ENCODE measurements at regions of chr14 and their contacts with region 1.

Region 1: DNA sequence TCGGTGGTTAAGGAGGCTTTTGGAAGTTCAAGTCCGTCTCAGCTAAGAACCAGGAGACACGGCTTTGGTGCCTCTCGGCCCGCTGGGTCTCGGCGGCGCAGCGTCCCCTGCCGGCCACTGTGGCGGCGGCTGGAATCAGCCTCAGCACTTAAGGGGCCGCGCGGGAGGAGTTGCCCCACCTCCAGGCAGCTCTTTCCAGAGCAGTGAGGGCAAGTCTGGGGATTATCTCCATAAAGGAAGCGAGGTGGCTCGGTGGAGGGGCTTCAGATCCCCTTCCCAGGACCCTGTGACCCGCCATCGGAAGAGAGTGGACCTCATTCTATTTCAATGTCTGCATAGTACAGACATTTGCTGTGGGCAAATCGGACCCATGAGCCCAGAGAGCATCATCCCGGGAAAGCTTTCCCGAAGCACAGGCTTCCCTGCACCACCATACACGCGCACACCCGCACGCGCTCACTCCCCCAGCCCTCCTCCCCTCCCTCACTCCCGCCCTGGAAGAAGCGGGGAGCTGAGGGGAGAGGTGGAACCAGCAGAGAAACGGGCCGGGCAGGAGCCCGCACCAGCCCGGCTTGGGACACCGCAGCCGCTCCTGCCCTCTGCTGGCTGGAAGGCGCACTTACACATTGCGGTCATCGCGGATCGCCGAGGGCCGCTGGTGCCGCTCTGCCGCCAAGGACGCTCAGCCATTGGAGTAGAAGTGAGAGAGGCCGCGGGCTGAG is 15.9 kb downstream of the RNASE2 start:
- DNase-seq: peak; percentile 83
- ATAC-seq: peak; percentile 91
- H3K4me3 Mint-ChIP-seq: peak overlapping the region; percentile 86
- H3K27ac Mint-ChIP-seq: peak overlapping the region; percentile 56
- H3K4me1 Mint-ChIP-seq: peaks cover 14% of the 10 kb centered on the region
- H3K27me3 Mint-ChIP-seq: peaks cover 47% of the 10 kb centered on the region

Region 2: GRCh38 chr14:20682435-20683124 is 288.6 kb before region 1 on chr14:
- CTCF ChIA-PET with region 1: interaction called, 14 read pairs
- POLR2A ChIA-PET with region 1: no interaction called
- DNase-seq: peak; percentile 83
- ATAC-seq: peak; percentile 60
- H3K4me3 Mint-ChIP-seq: no peak overlapping the region
- H3K27ac Mint-ChIP-seq: no peak overlapping the region
- H3K4me1 Mint-ChIP-seq: peaks cover 14% of the 10 kb centered on the region
- H3K27me3 Mint-ChIP-seq: no peaks in the 10 kb centered on the region

Region 3: GRCh38 chr14:20697273-20698017 is 273.7 kb before region 1 on chr14:
- CTCF ChIA-PET with region 1: interaction called, 26 read pairs
- POLR2A ChIA-PET with region 1: no interaction called
- DNase-seq: peak; percentile 72
- ATAC-seq: peak; percentile 75
- H3K4me3 Mint-ChIP-seq: no peak overlapping the region
- H3K27ac Mint-ChIP-seq: no peak overlapping the region
- H3K4me1 Mint-ChIP-seq: no peaks in the 10 kb centered on the region
- H3K27me3 Mint-ChIP-seq: peaks cover 8% of the 10 kb centered on the region

Region 4: GRCh38 chr14:20855652-20856291 is 115.4 kb before region 1 on chr14:
- CTCF ChIA-PET with region 1: interaction called, 79 read pairs
- POLR2A ChIA-PET with region 1: interaction called, 3 read pairs
- DNase-seq: peak; percentile 63
- ATAC-seq: peak; percentile 84
- H3K4me3 Mint-ChIP-seq: no peak overlapping the region
- H3K27ac Mint-ChIP-seq: no peak overlapping the region
- H3K4me1 Mint-ChIP-seq: peaks cover 4% of the 10 kb centered on the region
- H3K27me3 Mint-ChIP-seq: peaks cover 23% of the 10 kb centered on the region

Region 5: DNA sequence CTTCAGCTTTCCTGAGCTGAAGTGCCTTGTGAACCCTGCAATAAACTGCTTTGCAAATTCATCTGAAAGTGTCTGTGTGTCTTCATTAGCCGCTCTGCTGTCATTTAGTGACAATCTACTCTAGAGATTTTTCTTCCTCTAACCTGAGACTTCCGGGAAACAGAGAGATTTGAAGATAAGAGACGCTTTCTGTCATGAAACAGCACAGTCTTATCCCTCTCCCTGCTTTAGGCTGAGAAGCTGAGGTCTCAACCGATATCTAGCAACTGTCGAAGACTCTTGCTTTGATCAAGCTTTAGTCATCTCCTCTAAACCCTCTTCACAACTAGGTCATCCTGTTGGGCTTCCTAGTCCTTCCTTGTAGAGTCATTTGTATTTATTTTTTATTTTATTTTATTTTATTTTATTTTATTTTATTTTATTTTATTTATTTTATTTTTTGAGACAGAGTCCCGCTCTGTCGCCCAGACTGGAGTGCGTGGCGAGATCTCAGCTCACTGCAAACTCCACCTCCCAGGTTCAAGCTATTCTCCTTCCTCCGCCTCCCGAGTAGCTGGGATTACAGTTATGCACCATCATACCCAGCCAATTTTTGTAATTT is 14.7 kb before region 1 on chr14:
- CTCF ChIA-PET with region 1: interaction called, 44 read pairs
- POLR2A ChIA-PET with region 1: no interaction called
- DNase-seq: no peak
- ATAC-seq: no peak
- H3K4me3 Mint-ChIP-seq: no peak overlapping the region
- H3K27ac Mint-ChIP-seq: peak overlapping the region; percentile 13
- H3K4me1 Mint-ChIP-seq: peaks cover 27% of the 10 kb centered on the region
- H3K27me3 Mint-ChIP-seq: peaks cover 23% of the 10 kb centered on the region

Region 6: GRCh38 chr14:20989572-20990551 is 18.7 kb after region 1 on chr14 and contains the start of gene METTL17:
- CTCF ChIA-PET with region 1: interaction called, 16 read pairs
- POLR2A ChIA-PET with region 1: no interaction called
- DNase-seq: peak; percentile 94
- ATAC-seq: peak; percentile 97
- H3K4me3 Mint-ChIP-seq: peak within 1 kb of the TSS; percentile 92
- H3K27ac Mint-ChIP-seq: peak within 1 kb of the TSS; percentile 90
- H3K4me1 Mint-ChIP-seq: peaks cover 41% of the 10 kb centered on the region
- H3K27me3 Mint-ChIP-seq: no peaks in the 10 kb centered on the region
- total RNA-seq, gene METTL17: 97.5 to 103 TPM

Region 7: GRCh38 chr14:21014761-21015190 is 43.6 kb after region 1 on chr14:
- CTCF ChIA-PET with region 1: interaction called, 11 read pairs
- POLR2A ChIA-PET with region 1: no interaction called
- DNase-seq: peak; percentile 82
- ATAC-seq: peak; percentile 80
- H3K4me3 Mint-ChIP-seq: no peak overlapping the region
- H3K27ac Mint-ChIP-seq: no peak overlapping the region
- H3K4me1 Mint-ChIP-seq: no peaks in the 10 kb centered on the region
- H3K27me3 Mint-ChIP-seq: peaks cover 21% of the 10 kb centered on the region